ENCODE measurements at regions of chr19 and their contacts with region 1.

Region 1: DNA sequence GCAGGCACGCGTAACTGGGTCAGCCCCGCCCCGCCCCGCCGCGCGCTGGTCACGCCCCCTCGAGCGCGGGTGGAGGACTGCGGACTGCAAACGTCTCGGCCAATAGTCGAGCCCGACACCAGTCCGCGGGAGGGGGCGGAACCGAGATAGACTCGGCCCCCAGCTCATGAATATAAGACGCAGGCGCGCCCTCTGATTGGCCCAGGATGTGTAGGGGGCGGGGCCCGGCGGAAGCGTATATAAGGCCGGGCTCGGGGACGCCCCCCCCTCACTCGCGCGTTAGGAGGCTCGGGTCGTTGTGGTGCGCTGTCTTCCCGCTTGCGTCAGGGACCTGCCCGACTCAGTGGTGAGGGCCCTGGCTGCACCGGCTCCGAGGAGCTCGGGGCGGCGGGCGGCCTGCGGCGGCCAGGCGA is at the start of gene CIRBP:
- DNase-seq: peak; percentile 98 to 100 (median 99)
- ATAC-seq: peak; percentile 81
- H3K4me3 ChIP-seq: peak within 1 kb of the TSS; percentile 99
- H3K4me3 Mint-ChIP-seq: peak within 1 kb of the TSS; percentile 94
- H3K27ac ChIP-seq: peak within 1 kb of the TSS; percentile 78 to 84
- H3K27ac Mint-ChIP-seq: peak within 1 kb of the TSS; percentile 88
- H3K4me1 ChIP-seq: peaks cover 86% of the 10 kb centered on the region
- H3K4me1 Mint-ChIP-seq: peaks cover 68% of the 10 kb centered on the region
- H3K27me3 ChIP-seq: no peaks in the 10 kb centered on the region
- H3K27me3 Mint-ChIP-seq: no peaks in the 10 kb centered on the region
- CTCF ChIP-seq: no peak
- total RNA-seq, gene CIRBP: 614 to 628 TPM

Region 2: DNA sequence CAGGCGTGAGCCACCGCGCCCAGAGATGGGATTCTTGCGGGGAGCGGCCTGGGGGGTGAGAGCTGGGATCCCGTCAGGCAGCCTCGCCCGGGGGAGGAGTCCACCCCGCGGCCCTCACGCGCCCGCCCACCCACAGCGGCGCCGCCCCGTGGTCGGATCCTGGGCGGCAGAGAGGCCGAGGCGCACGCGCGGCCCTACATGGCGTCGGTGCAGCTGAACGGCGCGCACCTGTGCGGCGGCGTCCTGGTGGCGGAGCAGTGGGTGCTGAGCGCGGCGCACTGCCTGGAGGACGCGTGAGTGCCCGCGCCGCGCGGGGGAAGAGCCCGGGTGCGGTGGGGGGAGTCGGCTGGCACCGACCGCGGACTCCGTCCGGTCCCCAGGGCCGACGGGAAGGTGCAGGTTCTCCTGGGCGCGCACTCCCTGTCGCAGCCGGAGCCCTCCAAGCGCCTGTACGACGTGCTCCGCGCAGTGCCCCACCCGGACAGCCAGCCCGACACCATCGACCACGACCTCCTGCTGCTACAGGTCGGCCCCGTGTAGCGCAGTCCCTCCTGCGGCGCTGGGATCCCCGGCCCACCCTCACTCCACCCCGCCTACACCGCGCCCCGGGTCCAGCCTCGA is 408.5 kb before region 1 on chr19:
- CTCF ChIA-PET with region 1: no interaction called
- POLR2A ChIA-PET with region 1: interaction called, 11 read pairs
- intact Hi-C with region 1: no loop called
- DNase-seq: peak; percentile 19 to 87 (median 56)
- ATAC-seq: peak; percentile 38
- H3K4me3 ChIP-seq: peak overlapping the region; percentile 20
- H3K4me3 Mint-ChIP-seq: peak overlapping the region; percentile 45
- H3K27ac ChIP-seq: no peak overlapping the region
- H3K27ac Mint-ChIP-seq: no peak overlapping the region
- H3K4me1 ChIP-seq: peaks cover 49% of the 10 kb centered on the region
- H3K4me1 Mint-ChIP-seq: peaks cover 23% of the 10 kb centered on the region
- H3K27me3 ChIP-seq: peaks cover 9 to 16% of the 10 kb centered on the region in 2 experiments
- H3K27me3 Mint-ChIP-seq: peaks cover 7% of the 10 kb centered on the region
- CTCF ChIP-seq: no peak

Region 3: GRCh38 chr19:1026189-1027019 is 242.7 kb before region 1 on chr19 and contains the start of gene CNN2:
- CTCF ChIA-PET with region 1: no interaction called
- POLR2A ChIA-PET with region 1: interaction called, 29 read pairs
- intact Hi-C with region 1: no loop called
- DNase-seq: peak in 11 of 14 experiments; percentile 47 to 83 (median 66)
- ATAC-seq: peak; percentile 16
- H3K4me3 ChIP-seq: peak within 1 kb of the TSS; percentile 99
- H3K4me3 Mint-ChIP-seq: peak within 1 kb of the TSS; percentile 99
- H3K27ac ChIP-seq: peak within 1 kb of the TSS; percentile 73 to 85
- H3K27ac Mint-ChIP-seq: peak within 1 kb of the TSS; percentile 93
- H3K4me1 ChIP-seq: peaks cover 50% of the 10 kb centered on the region
- H3K4me1 Mint-ChIP-seq: peaks cover 24% of the 10 kb centered on the region
- H3K27me3 ChIP-seq: no peaks in the 10 kb centered on the region
- H3K27me3 Mint-ChIP-seq: peaks cover 3% of the 10 kb centered on the region
- CTCF ChIP-seq: no peak
- total RNA-seq, gene CNN2: 307 to 318 TPM

Region 4: GRCh38 chr19:1074544-1075283 is 194.4 kb before region 1 on chr19:
- CTCF ChIA-PET with region 1: no interaction called
- POLR2A ChIA-PET with region 1: interaction called, 35 read pairs
- intact Hi-C with region 1: no loop called
- DNase-seq: peak; percentile 95 to 100 (median 97)
- ATAC-seq: peak; percentile 25
- H3K4me3 ChIP-seq: peak overlapping the region; percentile 48
- H3K4me3 Mint-ChIP-seq: peak overlapping the region; percentile 87
- H3K27ac ChIP-seq: peak overlapping the region; percentile 52 to 96
- H3K27ac Mint-ChIP-seq: peak overlapping the region; percentile 98
- H3K4me1 ChIP-seq: peaks cover 89% of the 10 kb centered on the region
- H3K4me1 Mint-ChIP-seq: peaks cover 53% of the 10 kb centered on the region
- H3K27me3 ChIP-seq: no peaks in the 10 kb centered on the region
- H3K27me3 Mint-ChIP-seq: peaks cover 4% of the 10 kb centered on the region
- CTCF ChIP-seq: no peak

Region 5: DNA sequence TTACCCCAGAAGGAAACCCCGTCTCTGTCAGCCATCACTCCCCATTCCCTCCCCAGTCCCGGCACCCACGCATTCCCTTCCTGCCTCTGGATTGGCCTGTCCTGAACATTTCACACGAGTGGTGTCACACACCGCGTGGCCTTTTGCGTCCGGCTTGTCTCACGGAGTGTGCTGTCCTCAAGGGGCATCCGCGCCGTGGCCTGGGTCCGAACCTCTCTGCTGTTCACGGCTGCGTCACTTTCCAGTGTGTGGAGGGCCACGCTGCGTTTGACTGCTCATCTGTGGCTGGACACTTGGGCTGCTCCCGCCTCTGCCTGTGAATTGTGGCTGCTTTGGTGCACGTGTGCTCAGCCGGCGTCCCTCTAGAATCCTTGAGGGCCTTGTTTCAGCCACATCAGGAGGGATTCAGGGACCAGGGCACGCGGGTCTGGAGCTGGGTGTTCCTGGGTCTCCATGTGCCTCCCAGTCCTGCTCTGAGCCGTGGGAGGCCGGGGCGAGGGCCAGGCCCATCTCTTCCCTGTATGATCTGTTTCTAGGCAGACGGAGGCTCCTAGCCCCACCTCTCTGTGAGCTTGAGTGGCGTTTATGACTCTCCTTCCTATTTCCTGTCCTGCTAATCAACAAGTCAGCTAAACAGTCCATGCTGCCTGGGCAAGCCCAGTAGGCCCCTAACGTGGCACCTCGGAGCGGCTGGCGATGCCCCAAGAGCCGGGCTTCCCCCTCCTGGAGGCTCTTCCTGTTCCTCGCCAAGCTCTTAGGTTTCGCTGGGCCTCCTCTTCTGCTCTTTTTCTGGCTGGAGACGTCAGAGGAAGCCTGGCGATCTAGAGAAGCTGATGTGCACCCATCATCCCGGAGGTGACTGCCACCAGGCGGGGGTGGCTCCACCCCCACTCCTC is 55.4 kb before region 1 on chr19:
- CTCF ChIA-PET with region 1: interaction called, 3 read pairs
- POLR2A ChIA-PET with region 1: interaction called, 13 read pairs
- intact Hi-C with region 1: no loop called
- DNase-seq: peak in 13 of 14 experiments; percentile 19 to 88 (median 50)
- ATAC-seq: peak; percentile 94
- H3K4me3 ChIP-seq: peak overlapping the region; percentile 26
- H3K4me3 Mint-ChIP-seq: peak overlapping the region; percentile 85
- H3K27ac ChIP-seq: peak overlapping the region; percentile 54 to 80
- H3K27ac Mint-ChIP-seq: peak overlapping the region; percentile 90
- H3K4me1 ChIP-seq: peaks cover 54% of the 10 kb centered on the region
- H3K4me1 Mint-ChIP-seq: peaks cover 22% of the 10 kb centered on the region
- H3K27me3 ChIP-seq: no peaks in the 10 kb centered on the region
- H3K27me3 Mint-ChIP-seq: no peaks in the 10 kb centered on the region
- CTCF ChIP-seq: no peak

Region 6: GRCh38 chr19:1324806-1325567 is 55.9 kb after region 1 on chr19:
- CTCF ChIA-PET with region 1: no interaction called
- POLR2A ChIA-PET with region 1: no interaction called
- intact Hi-C with region 1: no loop called
- DNase-seq: peak in 7 of 14 experiments; percentile 4 to 49 (median 31)
- ATAC-seq: peak; percentile 34
- H3K4me3 ChIP-seq: peak overlapping the region; percentile 16
- H3K4me3 Mint-ChIP-seq: no peak overlapping the region
- H3K27ac ChIP-seq: no peak overlapping the region
- H3K27ac Mint-ChIP-seq: no peak overlapping the region
- H3K4me1 ChIP-seq: peaks cover 11% of the 10 kb centered on the region
- H3K4me1 Mint-ChIP-seq: no peaks in the 10 kb centered on the region
- H3K27me3 ChIP-seq: peaks cover 24 to 28% of the 10 kb centered on the region in 2 experiments
- H3K27me3 Mint-ChIP-seq: peaks cover 30% of the 10 kb centered on the region
- CTCF ChIP-seq: no peak

Region 7: GRCh38 chr19:1354977-1355567 is 86.0 kb after region 1 on chr19:
- CTCF ChIA-PET with region 1: no interaction called
- POLR2A ChIA-PET with region 1: interaction called, 20 read pairs
- intact Hi-C with region 1: no loop called
- DNase-seq: peak in 1 of 14 experiments; percentile 13
- ATAC-seq: peak; percentile 57
- H3K4me3 ChIP-seq: peak overlapping the region; percentile 75
- H3K4me3 Mint-ChIP-seq: peak overlapping the region; percentile 83
- H3K27ac ChIP-seq: no peak overlapping the region
- H3K27ac Mint-ChIP-seq: peak overlapping the region; percentile 29
- H3K4me1 ChIP-seq: peaks cover 20% of the 10 kb centered on the region
- H3K4me1 Mint-ChIP-seq: peaks cover 17% of the 10 kb centered on the region
- H3K27me3 ChIP-seq: no peaks in the 10 kb centered on the region
- H3K27me3 Mint-ChIP-seq: no peaks in the 10 kb centered on the region
- CTCF ChIP-seq: no peak

Measured in CD4-positive, alpha-beta T cell (primary cell).